ENCODE measurements at regions of chr7 and their contacts with region 1.

Region 1: DNA sequence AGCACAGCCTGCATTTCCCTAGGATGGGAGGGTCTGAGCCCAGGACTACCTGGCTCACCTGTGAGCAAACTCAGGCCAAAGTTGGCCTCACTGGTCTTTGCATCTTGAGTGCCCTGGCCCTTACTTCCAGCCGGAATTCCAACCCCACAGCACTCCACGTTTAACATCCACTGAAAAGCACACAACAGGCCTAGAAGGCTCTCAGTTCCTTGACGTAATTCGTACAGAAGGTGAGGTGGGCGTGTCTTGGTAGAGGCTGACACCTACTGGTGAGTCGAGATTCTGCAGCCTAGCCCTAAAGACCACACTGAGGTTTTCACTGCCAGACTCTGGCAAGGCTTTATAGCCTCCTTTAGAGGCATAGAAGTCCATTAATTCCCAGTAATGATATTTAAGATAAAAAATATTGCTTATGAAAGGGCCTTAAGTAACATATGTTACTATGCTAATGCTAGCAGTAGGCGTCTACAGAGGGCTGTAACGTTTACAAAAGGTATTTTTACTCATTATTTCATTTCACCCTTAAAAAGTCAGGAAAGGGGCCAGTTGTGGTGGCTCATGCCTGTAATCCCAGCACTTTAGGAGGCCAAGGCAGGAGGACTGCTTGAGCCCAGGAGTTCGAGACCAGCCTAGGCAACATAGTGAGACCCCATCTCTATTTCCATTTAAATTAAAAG is 95.8 kb downstream of the HIP1 start:
- DNase-seq: peak in 1 of 3 donors; percentile 47
- ATAC-seq: peak; percentile 75
- H3K4me3 ChIP-seq: no peak overlapping the region
- H3K4me1 ChIP-seq: peaks cover 4% of the 10 kb centered on the region
- CTCF ChIP-seq: peak; percentile 59

Region 2: GRCh38 chr7:75534727-75535307 is 108.1 kb before region 1 on chr7:
- intact Hi-C with region 1: loop called in 1 of 2 experiments (anchors 10 kb)
- DNase-seq: no peak
- ATAC-seq: no peak
- H3K4me3 ChIP-seq: no peak overlapping the region
- H3K4me1 ChIP-seq: no peaks in the 10 kb centered on the region
- CTCF ChIP-seq: no peak

Region 3: GRCh38 chr7:76155938-76156337 is 513.0 kb after region 1 on chr7:
- intact Hi-C with region 1: no loop called
- DNase-seq: peak in 1 of 3 donors; percentile 47
- ATAC-seq: no peak
- H3K4me3 ChIP-seq: no peak overlapping the region
- H3K4me1 ChIP-seq: no peaks in the 10 kb centered on the region
- CTCF ChIP-seq: no peak

Measured in mucosa of descending colon (tissue), 3 donors.